ENCODE measurements at regions of chr3 and their contacts with region 1.

Region 1: GRCh38 chr3:37974121-37975083 is 16.2 kb upstream of the VILL start:
- DNase-seq: peak; percentile 68
- H3K4me3 Mint-ChIP-seq: no peak overlapping the region
- H3K27ac Mint-ChIP-seq: peak overlapping the region; percentile 12
- H3K4me1 Mint-ChIP-seq: peaks cover 10% of the 10 kb centered on the region
- H3K27me3 Mint-ChIP-seq: no peaks in the 10 kb centered on the region
- CTCF ChIP-seq: peak; percentile 58

Region 2: GRCh38 chr3:37956723-37957528 is 17.5 kb before region 1 on chr3:
- CTCF ChIA-PET with region 1: interaction called, 81 read pairs
- POLR2A ChIA-PET with region 1: interaction called, 3 read pairs
- intact Hi-C with region 1: no loop called
- DNase-seq: no peak
- H3K4me3 Mint-ChIP-seq: no peak overlapping the region
- H3K27ac Mint-ChIP-seq: peak overlapping the region; percentile 46
- H3K4me1 Mint-ChIP-seq: no peaks in the 10 kb centered on the region
- H3K27me3 Mint-ChIP-seq: no peaks in the 10 kb centered on the region
- CTCF ChIP-seq: no peak

Region 3: GRCh38 chr3:37986479-37987314 is 12.3 kb after region 1 on chr3:
- CTCF ChIA-PET with region 1: interaction called, 12 read pairs
- POLR2A ChIA-PET with region 1: interaction called, 5 read pairs
- intact Hi-C with region 1: no loop called
- DNase-seq: peak; percentile 50
- H3K4me3 Mint-ChIP-seq: no peak overlapping the region
- H3K27ac Mint-ChIP-seq: no peak overlapping the region
- H3K4me1 Mint-ChIP-seq: no peaks in the 10 kb centered on the region
- H3K27me3 Mint-ChIP-seq: no peaks in the 10 kb centered on the region
- CTCF ChIP-seq: no peak

Region 4: GRCh38 chr3:37996785-37997301 is 22.4 kb after region 1 on chr3:
- CTCF ChIA-PET with region 1: interaction called, 11 read pairs
- POLR2A ChIA-PET with region 1: interaction called, 5 read pairs
- intact Hi-C with region 1: loop called (anchors 2 kb)
- DNase-seq: peak; percentile 85
- H3K4me3 Mint-ChIP-seq: no peak overlapping the region
- H3K27ac Mint-ChIP-seq: peak overlapping the region; percentile 22
- H3K4me1 Mint-ChIP-seq: peaks cover 29% of the 10 kb centered on the region
- H3K27me3 Mint-ChIP-seq: no peaks in the 10 kb centered on the region
- CTCF ChIP-seq: peak; percentile 82

Region 5: GRCh38 chr3:38004415-38005076 is 30.1 kb after region 1 on chr3:
- CTCF ChIA-PET with region 1: interaction called, 10 read pairs
- POLR2A ChIA-PET with region 1: no interaction called
- intact Hi-C with region 1: loop called (anchors 1 kb)
- DNase-seq: peak; percentile 81
- H3K4me3 Mint-ChIP-seq: no peak overlapping the region
- H3K27ac Mint-ChIP-seq: no peak overlapping the region
- H3K4me1 Mint-ChIP-seq: peaks cover 23% of the 10 kb centered on the region
- H3K27me3 Mint-ChIP-seq: no peaks in the 10 kb centered on the region
- CTCF ChIP-seq: peak; percentile 69